Common myeloid progenitor, CD34-positive (primary cell): ENCODE measurements at regions of chr10 and their contacts with region 1.

Region 1: GRCh38 chr10:97278491-97278989 is 13.9 kb downstream of the ARHGAP19 start:
- DNase-seq: peak; percentile 89 to 95 (median 92)
- H3K4me3 ChIP-seq: no peak overlapping the region
- H3K27ac ChIP-seq: no peak overlapping the region
- H3K4me1 ChIP-seq: peaks cover 19 to 30% (median 24%) of the 10 kb centered on the region in 4 experiments
- H3K27me3 ChIP-seq: peaks cover 0 to 16% (median 0%) of the 10 kb centered on the region in 5 experiments

Region 2: DNA sequence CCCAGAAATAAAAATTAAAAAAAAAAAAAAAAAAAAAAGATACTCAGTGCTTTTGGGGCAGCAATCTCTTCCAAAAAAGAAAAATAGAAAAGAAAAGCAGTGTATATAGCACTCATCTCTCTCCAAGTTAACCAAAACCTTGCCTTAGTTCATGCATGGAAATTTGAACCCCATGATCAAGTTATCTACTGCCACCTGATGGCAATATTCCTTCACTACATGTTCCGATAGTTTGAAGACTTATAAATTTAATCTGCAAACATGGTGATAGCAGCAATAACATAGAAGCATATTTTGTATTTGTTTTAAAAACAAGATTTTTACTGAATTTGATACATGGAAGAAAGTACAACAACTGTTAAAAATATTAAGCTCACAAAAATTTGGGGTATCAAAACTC is 44.1 kb before region 1 on chr10:
- CTCF ChIA-PET with region 1: no interaction called
- POLR2A ChIA-PET with region 1: no interaction called
- DNase-seq: peak; percentile 51 to 73 (median 69)
- H3K4me3 ChIP-seq: no peak overlapping the region
- H3K27ac ChIP-seq: no peak overlapping the region
- H3K4me1 ChIP-seq: no peaks in the 10 kb centered on the region
- H3K27me3 ChIP-seq: no peaks in the 10 kb centered on the region

Region 3: DNA sequence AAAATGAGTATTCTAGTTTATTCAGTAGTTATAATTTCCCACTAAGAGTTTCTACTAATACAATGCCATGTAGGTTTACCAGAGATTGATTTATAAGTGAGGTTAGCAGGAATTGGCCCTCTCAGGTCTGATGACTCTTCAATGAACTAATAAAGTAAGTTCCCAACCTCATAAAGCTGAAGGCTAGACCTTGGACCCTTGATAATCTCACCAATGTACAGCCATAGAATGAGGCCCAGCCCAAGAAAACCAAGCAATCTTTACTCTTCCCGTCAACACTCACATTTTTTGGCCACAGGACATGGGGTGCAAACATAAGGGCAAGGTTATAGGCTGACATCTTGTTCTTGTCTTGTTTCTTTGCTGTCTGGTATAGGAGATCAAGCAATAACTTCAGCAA is 19.4 kb before region 1 on chr10:
- CTCF ChIA-PET with region 1: interaction called, 8 read pairs
- POLR2A ChIA-PET with region 1: interaction called, 11 read pairs
- DNase-seq: no peak
- H3K4me3 ChIP-seq: no peak overlapping the region
- H3K27ac ChIP-seq: no peak overlapping the region
- H3K4me1 ChIP-seq: no peaks in the 10 kb centered on the region
- H3K27me3 ChIP-seq: no peaks in the 10 kb centered on the region

Region 4: GRCh38 chr10:97318772-97319651 is 40.5 kb after region 1 on chr10 and contains the start of gene FRAT1:
- CTCF ChIA-PET with region 1: interaction called, 10 read pairs
- POLR2A ChIA-PET with region 1: interaction called, 5 read pairs
- DNase-seq: peak; percentile 91 to 94 (median 92)
- H3K4me3 ChIP-seq: peak within 1 kb of the TSS; percentile 68 to 91 (median 78)
- H3K27ac ChIP-seq: peak within 1 kb of the TSS; percentile 99 to 100
- H3K4me1 ChIP-seq: peaks cover 15 to 36% (median 30%) of the 10 kb centered on the region in 4 experiments
- H3K27me3 ChIP-seq: no peaks in the 10 kb centered on the region

Region 5: GRCh38 chr10:97355571-97355975 is 77.0 kb after region 1 on chr10:
- CTCF ChIA-PET with region 1: interaction called, 36 read pairs
- POLR2A ChIA-PET with region 1: interaction called, 3 read pairs
- DNase-seq: peak; percentile 26 to 58 (median 44)
- H3K4me3 ChIP-seq: no peak overlapping the region
- H3K27ac ChIP-seq: no peak overlapping the region
- H3K4me1 ChIP-seq: peaks cover 4 to 20% (median 18%) of the 10 kb centered on the region in 4 experiments
- H3K27me3 ChIP-seq: no peaks in the 10 kb centered on the region

Region 6: DNA sequence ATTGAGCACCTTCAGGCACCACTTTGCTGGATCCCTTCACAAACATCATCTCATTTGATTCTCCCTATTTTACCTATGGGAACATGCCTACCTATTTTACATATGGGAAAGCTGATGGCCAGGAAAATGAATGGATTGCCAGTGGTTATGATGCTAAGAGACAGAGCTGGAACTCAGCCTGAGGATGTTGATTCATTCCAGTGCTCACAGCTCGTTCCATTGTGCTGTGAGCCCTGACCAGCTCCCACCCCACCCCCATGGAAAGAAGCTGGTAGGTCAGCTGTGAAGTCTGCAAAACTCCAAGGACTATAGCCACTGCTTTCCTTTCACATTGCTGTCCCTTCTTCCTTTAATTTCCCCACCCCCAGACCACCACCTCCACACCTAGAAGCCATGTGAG is 229.8 kb after region 1 on chr10:
- CTCF ChIA-PET with region 1: no interaction called
- POLR2A ChIA-PET with region 1: no interaction called
- DNase-seq: no peak
- H3K4me3 ChIP-seq: no peak overlapping the region
- H3K27ac ChIP-seq: no peak overlapping the region
- H3K4me1 ChIP-seq: peaks cover 0 to 13% (median 0%) of the 10 kb centered on the region in 4 experiments
- H3K27me3 ChIP-seq: peaks cover 0 to 2% (median 0%) of the 10 kb centered on the region in 5 experiments